ENCODE measurements at regions of chr13 and their contacts with region 1.

Region 1: DNA sequence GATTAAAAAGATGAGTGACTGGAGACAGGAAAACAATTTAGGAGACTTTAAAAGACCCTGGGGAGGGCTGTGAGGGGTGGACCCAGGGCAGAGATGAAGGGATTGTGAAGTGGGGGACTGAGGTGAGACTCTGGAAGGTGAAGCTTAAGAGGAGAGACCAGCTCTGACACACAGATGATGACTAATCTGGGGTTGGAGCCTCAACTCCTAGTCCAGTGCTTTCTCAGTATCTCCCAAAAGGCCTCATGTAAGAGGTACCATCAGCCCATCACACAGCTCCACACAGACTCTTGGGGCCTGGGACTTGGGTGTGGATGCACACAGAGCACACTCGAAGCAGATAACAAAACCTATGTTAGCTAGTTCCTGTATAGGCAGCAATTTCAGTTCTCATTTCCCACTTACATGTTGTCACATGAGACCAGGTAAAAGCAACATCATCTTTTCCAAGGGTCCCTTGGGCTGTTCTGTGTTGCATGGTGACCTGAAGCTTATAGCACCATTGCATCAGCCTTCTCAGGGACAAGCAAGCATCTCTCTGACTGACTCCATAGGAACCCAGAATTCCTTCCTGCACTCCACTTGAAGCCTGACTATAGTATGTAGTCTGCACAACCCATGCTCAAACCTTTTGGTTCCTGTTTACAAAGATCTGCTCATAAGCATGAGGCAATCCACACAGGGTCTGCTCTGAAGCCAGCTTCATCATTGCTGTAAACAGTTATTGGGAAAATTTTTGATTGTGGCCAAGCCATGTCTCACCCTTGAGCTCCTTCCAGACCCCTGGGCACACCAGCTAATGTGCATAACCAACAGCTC is 88.6 kb upstream of the MYCBP2 start:
- DNase-seq: peak; percentile 58
- H3K4me3 ChIP-seq: no peak overlapping the region
- H3K27ac ChIP-seq: peak overlapping the region; percentile 29
- H3K4me1 ChIP-seq: peaks cover 31% of the 10 kb centered on the region
- CTCF ChIP-seq: no peak

Region 2: GRCh38 chr13:77338961-77339401 is 76.5 kb before region 1 on chr13:
- CTCF ChIA-PET with region 1: interaction called, 3 read pairs
- POLR2A ChIA-PET with region 1: interaction called, 10 read pairs
- intact Hi-C with region 1: no loop called
- DNase-seq: peak; percentile 73
- H3K4me3 ChIP-seq: peak overlapping the region; percentile 60
- H3K27ac ChIP-seq: peak overlapping the region; percentile 92
- H3K4me1 ChIP-seq: peaks cover 50% of the 10 kb centered on the region
- CTCF ChIP-seq: no peak

Region 3: GRCh38 chr13:77429320-77430142 is 14.1 kb after region 1 on chr13:
- CTCF ChIA-PET with region 1: interaction called, 4 read pairs
- POLR2A ChIA-PET with region 1: interaction called, 121 read pairs
- intact Hi-C with region 1: no loop called
- DNase-seq: peak; percentile 82
- H3K4me3 ChIP-seq: peak overlapping the region; percentile 36
- H3K27ac ChIP-seq: peak overlapping the region; percentile 71
- H3K4me1 ChIP-seq: peaks cover 18% of the 10 kb centered on the region
- CTCF ChIP-seq: no peak

Region 4: DNA sequence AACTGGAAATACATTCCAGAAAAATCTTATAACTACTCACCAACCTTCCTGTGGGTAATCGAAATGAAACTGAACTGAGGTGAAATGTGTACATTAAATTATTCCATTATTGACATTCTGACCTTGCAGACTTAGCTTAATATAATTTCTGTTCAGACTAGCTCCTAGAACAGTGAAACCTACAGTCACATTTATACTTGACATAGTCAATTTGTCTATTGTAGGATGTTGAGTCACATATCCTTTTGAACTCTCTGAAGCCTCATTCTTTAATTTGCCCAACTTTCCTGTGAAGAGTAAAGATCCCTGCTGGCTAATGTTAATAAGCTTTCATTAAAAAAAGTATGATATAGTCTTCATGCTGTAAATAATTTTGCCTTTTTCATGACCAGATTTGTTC is 28.0 kb after region 1 on chr13:
- CTCF ChIA-PET with region 1: no interaction called
- POLR2A ChIA-PET with region 1: interaction called, 10 read pairs
- intact Hi-C with region 1: no loop called
- DNase-seq: no peak
- H3K4me3 ChIP-seq: no peak overlapping the region
- H3K27ac ChIP-seq: no peak overlapping the region
- H3K4me1 ChIP-seq: no peaks in the 10 kb centered on the region
- CTCF ChIP-seq: no peak

Region 5: DNA sequence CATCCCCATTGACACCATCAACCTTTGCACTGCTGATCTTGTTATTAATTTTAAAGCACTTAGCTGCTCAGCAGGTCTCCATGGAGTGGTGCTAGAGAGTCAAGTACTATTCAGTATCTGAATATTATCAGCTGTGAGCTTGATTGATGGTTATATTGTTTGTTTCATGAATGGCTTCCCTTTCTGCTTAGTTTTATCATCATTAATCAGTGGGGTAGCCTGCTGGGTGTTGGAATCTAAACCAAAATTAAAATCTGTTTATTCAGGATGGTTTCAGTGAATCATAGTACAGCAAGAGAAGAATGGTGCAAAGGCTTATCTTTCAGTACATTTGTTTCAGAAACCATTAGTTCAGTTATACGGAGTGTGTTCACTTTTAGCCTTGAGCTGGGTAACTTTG is 77.5 kb after region 1 on chr13:
- CTCF ChIA-PET with region 1: no interaction called
- POLR2A ChIA-PET with region 1: no interaction called
- intact Hi-C with region 1: no loop called
- DNase-seq: peak; percentile 30
- H3K4me3 ChIP-seq: no peak overlapping the region
- H3K27ac ChIP-seq: no peak overlapping the region
- H3K4me1 ChIP-seq: no peaks in the 10 kb centered on the region
- CTCF ChIP-seq: peak; percentile 75

Region 6: DNA sequence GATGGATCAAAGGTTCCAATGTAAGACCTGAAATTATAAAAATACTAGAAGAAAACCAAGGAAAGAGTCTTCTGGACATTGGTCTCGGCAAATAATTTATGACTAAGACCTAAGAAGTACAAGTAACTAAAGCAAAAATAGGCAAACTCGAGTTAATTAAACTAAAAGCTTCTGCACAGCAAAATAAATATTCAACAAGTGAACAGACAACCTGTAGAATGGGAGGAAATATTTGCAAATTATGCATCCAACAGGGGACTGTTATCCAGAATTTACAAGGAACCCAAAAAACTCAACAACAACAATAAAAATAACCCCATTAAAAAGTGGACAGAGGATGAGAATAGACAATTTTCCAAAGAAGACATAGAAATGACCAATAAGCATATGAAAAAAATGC is 272.3 kb after region 1 on chr13:
- CTCF ChIA-PET with region 1: no interaction called
- POLR2A ChIA-PET with region 1: no interaction called
- intact Hi-C with region 1: no loop called
- DNase-seq: no peak
- H3K4me3 ChIP-seq: no peak overlapping the region
- H3K27ac ChIP-seq: no peak overlapping the region
- H3K4me1 ChIP-seq: no peaks in the 10 kb centered on the region
- CTCF ChIP-seq: no peak

Region 7: GRCh38 chr13:77767413-77767812 is 352.0 kb after region 1 on chr13:
- CTCF ChIA-PET with region 1: no interaction called
- POLR2A ChIA-PET with region 1: no interaction called
- intact Hi-C with region 1: no loop called
- DNase-seq: no peak
- H3K4me3 ChIP-seq: no peak overlapping the region
- H3K27ac ChIP-seq: no peak overlapping the region
- H3K4me1 ChIP-seq: no peaks in the 10 kb centered on the region
- CTCF ChIP-seq: no peak

Measured in OCI-LY7 (cell line).